Endothelial cell of umbilical vein (primary cell): ENCODE measurements at regions of chr3 and their contacts with region 1.

Region 1: GRCh38 chr3:170357176-170357919 is at the start of gene SKIL:
- DNase-seq: peak; percentile 93
- H3K4me3 ChIP-seq: peak within 1 kb of the TSS; percentile 67 to 94 (median 86)
- H3K27ac ChIP-seq: peak within 1 kb of the TSS; percentile 100
- H3K4me1 ChIP-seq: peaks cover 47% of the 10 kb centered on the region
- H3K27me3 ChIP-seq: no peaks in the 10 kb centered on the region
- CTCF ChIP-seq: peak in 1 of 2 donors; percentile 23
- POLR2A ChIP-seq: peak; percentile 74
- total RNA-seq, gene SKIL: 135 and 149 TPM in 2 replicates

Region 2: DNA sequence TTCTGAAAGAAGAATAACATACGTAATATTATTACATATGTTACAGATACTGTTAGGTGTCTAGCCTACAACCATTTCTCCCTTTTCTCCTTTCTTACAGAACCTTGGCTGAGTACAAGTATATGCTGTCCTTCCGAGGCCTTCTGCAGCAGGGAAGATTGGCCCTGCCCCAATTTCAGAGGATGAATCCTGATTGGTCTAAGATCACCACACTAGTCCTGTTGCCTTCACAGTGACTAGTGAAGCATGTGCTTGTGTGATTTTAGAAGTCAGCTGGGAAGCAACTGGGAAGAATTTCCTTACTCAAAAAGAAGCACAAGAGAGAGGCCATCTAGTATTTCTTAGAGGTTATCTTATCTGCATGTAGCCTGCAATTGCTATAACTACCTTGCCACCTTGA is 663.2 kb before region 1 on chr3:
- CTCF ChIA-PET with region 1: no interaction called
- POLR2A ChIA-PET with region 1: no interaction called
- dilution Hi-C with region 1: no loop called
- intact Hi-C with region 1: no loop called
- DNase-seq: no peak
- H3K4me3 ChIP-seq: no peak overlapping the region
- H3K27ac ChIP-seq: no peak overlapping the region
- H3K4me1 ChIP-seq: no peaks in the 10 kb centered on the region
- H3K27me3 ChIP-seq: peaks cover 12 to 14% of the 10 kb centered on the region in 2 experiments
- CTCF ChIP-seq: no peak
- POLR2A ChIP-seq: no peak

Region 3: GRCh38 chr3:169772897-169773828 is 584.2 kb before region 1 on chr3 and contains the start of gene MYNN:
- CTCF ChIA-PET with region 1: no interaction called
- POLR2A ChIA-PET with region 1: no interaction called
- dilution Hi-C with region 1: no loop called
- intact Hi-C with region 1: loop called (anchors 2 kb)
- DNase-seq: peak; percentile 93
- H3K4me3 ChIP-seq: peak within 1 kb of the TSS; percentile 75 to 94 (median 77)
- H3K27ac ChIP-seq: peak within 1 kb of the TSS; percentile 94
- H3K4me1 ChIP-seq: peaks cover 13% of the 10 kb centered on the region
- H3K27me3 ChIP-seq: no peaks in the 10 kb centered on the region
- CTCF ChIP-seq: peak; percentile 4 to 24
- POLR2A ChIP-seq: peak; percentile 95
- total RNA-seq, gene MYNN: 11.7 and 12.7 TPM in 2 replicates

Region 4: DNA sequence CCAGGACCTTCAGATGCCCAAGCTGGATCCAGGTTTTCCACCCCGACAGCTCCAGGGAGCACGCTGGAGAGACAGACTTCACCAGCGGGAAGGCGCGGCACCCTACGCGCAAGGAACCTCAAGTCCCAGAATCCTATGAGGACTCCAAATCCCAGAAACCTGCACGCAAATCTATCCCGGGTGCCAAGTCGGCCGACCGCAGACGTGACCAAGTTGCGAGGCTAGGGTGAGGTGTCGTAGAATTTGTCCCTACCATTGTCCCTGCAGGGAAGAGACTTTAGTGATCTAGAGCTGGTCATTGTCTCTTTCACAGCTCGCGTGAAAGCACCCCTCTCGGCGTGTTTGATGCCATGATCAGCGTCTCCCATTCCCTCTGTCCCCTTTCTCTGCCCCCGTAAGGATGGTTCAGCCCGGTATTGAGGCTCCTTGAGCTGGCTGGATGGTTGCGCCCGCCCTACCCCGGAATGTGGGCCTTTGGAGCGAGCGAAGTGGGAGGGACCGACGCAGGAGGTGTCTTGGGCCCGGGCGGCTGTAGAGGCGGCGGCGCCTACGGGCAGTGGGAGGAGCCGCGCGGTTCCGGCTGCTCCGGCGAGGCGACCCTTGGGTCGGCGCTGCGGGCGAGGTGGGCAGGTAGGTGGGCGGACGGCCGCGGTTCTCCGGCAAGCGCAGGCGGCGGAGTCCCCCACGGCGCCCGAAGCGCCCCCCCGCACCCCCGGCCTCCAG is 135.3 kb before region 1 on chr3 and contains the start of gene PRKCI:
- CTCF ChIA-PET with region 1: no interaction called
- POLR2A ChIA-PET with region 1: no interaction called
- dilution Hi-C with region 1: no loop called
- intact Hi-C with region 1: loop called (anchors 5 kb)
- DNase-seq: peak; percentile 97
- H3K4me3 ChIP-seq: peak within 1 kb of the TSS; percentile 27 to 98 (median 89)
- H3K27ac ChIP-seq: peak within 1 kb of the TSS; percentile 94
- H3K4me1 ChIP-seq: peaks cover 12% of the 10 kb centered on the region
- H3K27me3 ChIP-seq: no peaks in the 10 kb centered on the region
- CTCF ChIP-seq: no peak
- POLR2A ChIP-seq: peak; percentile 32
- total RNA-seq, gene PRKCI: 22.0 and 23.9 TPM in 2 replicates

Region 5: DNA sequence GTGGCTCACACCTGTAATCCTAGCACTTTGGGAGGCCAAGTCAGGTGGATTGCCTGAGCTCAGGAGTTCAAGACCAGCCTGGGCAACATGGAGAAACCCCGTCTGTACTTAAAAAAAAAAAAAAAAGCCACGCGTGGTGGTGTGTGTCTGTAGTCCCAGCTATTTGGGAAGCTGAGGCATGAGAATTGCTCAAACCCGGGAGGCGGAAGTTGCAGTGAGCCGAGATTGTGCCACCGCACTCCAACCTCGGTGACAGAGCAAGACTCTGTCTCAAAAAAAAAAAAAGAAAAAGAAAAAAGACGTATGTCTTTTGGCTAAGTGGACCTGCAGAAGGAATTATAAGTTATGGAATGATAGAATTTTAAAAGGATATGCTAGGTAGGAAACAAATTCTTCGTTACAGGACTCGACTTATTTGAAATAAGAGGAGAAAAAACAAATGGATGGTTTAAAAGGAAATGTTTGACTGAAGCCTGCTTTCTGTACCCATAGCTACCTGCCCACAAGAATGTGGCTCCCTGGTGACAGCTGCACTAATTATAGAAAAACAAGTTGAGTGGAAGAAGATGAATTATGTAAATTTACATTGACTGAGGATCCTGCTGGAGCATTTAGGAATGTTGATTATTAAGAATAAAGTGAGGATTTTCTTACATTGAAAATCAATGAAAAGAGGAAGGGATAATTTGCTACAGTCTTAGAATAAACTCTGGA is 35.9 kb before region 1 on chr3:
- CTCF ChIA-PET with region 1: interaction called, 11 read pairs
- POLR2A ChIA-PET with region 1: interaction called, 4 read pairs
- dilution Hi-C with region 1: no loop called
- intact Hi-C with region 1: loop called (anchors 1 kb)
- DNase-seq: no peak
- H3K4me3 ChIP-seq: no peak overlapping the region
- H3K27ac ChIP-seq: peak overlapping the region; percentile 79
- H3K4me1 ChIP-seq: peaks cover 14% of the 10 kb centered on the region
- H3K27me3 ChIP-seq: no peaks in the 10 kb centered on the region
- CTCF ChIP-seq: no peak
- POLR2A ChIP-seq: no peak

Region 6: DNA sequence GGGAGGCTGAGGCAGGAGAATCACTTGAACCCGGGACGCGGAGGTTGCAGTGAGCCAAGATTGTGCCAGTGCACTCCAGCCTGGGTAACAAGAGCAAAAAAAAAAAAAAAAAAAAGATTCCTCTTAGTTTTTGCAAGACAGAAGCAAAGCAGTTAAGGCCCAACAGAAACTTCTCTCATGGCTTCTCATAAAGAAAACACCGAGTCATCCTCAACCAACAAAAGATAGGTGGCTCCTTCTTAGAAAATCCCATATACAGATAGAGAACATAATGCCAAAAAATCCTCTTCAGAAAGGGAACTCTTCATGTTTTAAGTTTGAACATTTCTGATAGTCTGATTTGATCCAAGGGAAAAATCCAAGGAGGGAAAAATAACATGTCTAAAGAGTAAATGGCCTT is 12.4 kb before region 1 on chr3:
- CTCF ChIA-PET with region 1: interaction called, 5 read pairs
- POLR2A ChIA-PET with region 1: interaction called, 5 read pairs
- dilution Hi-C with region 1: no loop called
- intact Hi-C with region 1: loop called (anchors 1 kb)
- DNase-seq: peak; percentile 31
- H3K4me3 ChIP-seq: no peak overlapping the region
- H3K27ac ChIP-seq: peak overlapping the region; percentile 72
- H3K4me1 ChIP-seq: peaks cover 13% of the 10 kb centered on the region
- H3K27me3 ChIP-seq: no peaks in the 10 kb centered on the region
- CTCF ChIP-seq: no peak
- POLR2A ChIP-seq: no peak

Region 7: GRCh38 chr3:170506556-170506955 is 149.2 kb after region 1 on chr3:
- CTCF ChIA-PET with region 1: no interaction called
- POLR2A ChIA-PET with region 1: no interaction called
- dilution Hi-C with region 1: no loop called
- intact Hi-C with region 1: no loop called
- DNase-seq: peak; percentile 31
- H3K4me3 ChIP-seq: no peak overlapping the region
- H3K27ac ChIP-seq: no peak overlapping the region
- H3K4me1 ChIP-seq: peaks cover 4% of the 10 kb centered on the region
- H3K27me3 ChIP-seq: no peaks in the 10 kb centered on the region
- CTCF ChIP-seq: no peak
- POLR2A ChIP-seq: no peak

Region 8: DNA sequence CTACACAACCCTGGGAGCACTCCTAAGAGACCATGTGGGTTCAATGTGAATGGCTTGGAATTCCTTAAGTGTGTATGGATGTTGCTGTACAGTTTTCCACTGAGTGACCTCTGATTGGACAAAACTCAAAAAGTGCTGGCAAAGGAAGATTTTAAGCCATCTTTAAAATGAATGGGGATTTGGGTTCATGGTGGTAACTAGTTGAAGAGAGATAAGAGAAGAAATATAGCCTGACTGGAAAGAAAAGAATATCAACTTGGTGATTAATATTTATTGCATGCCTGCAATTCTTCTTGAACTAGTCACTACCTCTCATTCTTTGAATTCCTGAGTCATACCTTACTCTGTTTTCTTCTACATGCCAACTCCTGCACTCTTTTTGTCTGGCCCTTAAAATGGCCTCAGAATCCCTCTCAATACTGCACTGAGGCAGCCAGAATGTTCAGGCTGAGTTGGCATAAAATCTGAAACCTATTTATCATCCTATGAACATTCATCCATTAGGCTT is 387.9 kb after region 1 on chr3:
- CTCF ChIA-PET with region 1: no interaction called
- POLR2A ChIA-PET with region 1: no interaction called
- dilution Hi-C with region 1: no loop called
- intact Hi-C with region 1: loop called (anchors 1 kb)
- DNase-seq: peak; percentile 89
- H3K4me3 ChIP-seq: no peak overlapping the region
- H3K27ac ChIP-seq: peak overlapping the region; percentile 90
- H3K4me1 ChIP-seq: peaks cover 64% of the 10 kb centered on the region
- H3K27me3 ChIP-seq: no peaks in the 10 kb centered on the region
- CTCF ChIP-seq: no peak
- POLR2A ChIP-seq: peak; percentile 56